OCI-LY7 (cell line): ENCODE measurements at regions of chr18 and their contacts with region 1.

Region 1: GRCh38 chr18:10787293-10787901 is 261.6 kb downstream of the NAPG start:
- DNase-seq: peak; percentile 85
- H3K4me3 ChIP-seq: no peak overlapping the region
- H3K27ac ChIP-seq: no peak overlapping the region
- H3K4me1 ChIP-seq: peaks cover 10% of the 10 kb centered on the region
- CTCF ChIP-seq: peak; percentile 98

Region 2: GRCh38 chr18:10560450-10561045 is 226.8 kb before region 1 on chr18:
- CTCF ChIA-PET with region 1: no interaction called
- POLR2A ChIA-PET with region 1: no interaction called
- intact Hi-C with region 1: loop called (anchors 10 kb)
- DNase-seq: peak; percentile 74
- H3K4me3 ChIP-seq: no peak overlapping the region
- H3K27ac ChIP-seq: no peak overlapping the region
- H3K4me1 ChIP-seq: peaks cover 11% of the 10 kb centered on the region
- CTCF ChIP-seq: peak; percentile 92

Region 3: DNA sequence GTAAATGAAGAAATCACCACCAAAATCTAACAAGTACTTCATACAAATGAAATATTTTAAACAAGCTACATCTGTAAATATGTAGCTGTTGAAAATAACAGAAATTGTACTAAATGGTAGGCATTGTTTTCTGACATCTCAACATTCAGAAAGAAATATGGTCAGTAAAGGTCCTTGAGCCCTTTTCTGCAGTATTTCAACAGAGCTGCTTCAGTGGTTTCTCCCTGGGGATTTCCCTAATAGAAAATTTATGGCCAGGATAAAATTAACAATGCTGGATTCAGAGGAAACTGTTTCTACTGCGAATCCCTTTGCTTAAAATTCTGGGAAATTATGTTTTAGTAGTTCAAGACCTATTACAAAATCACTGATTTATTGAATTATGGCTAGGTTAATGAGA is 105.4 kb after region 1 on chr18:
- CTCF ChIA-PET with region 1: no interaction called
- POLR2A ChIA-PET with region 1: no interaction called
- intact Hi-C with region 1: no loop called
- DNase-seq: no peak
- H3K4me3 ChIP-seq: no peak overlapping the region
- H3K27ac ChIP-seq: no peak overlapping the region
- H3K4me1 ChIP-seq: peaks cover 28% of the 10 kb centered on the region
- CTCF ChIP-seq: no peak

Region 4: DNA sequence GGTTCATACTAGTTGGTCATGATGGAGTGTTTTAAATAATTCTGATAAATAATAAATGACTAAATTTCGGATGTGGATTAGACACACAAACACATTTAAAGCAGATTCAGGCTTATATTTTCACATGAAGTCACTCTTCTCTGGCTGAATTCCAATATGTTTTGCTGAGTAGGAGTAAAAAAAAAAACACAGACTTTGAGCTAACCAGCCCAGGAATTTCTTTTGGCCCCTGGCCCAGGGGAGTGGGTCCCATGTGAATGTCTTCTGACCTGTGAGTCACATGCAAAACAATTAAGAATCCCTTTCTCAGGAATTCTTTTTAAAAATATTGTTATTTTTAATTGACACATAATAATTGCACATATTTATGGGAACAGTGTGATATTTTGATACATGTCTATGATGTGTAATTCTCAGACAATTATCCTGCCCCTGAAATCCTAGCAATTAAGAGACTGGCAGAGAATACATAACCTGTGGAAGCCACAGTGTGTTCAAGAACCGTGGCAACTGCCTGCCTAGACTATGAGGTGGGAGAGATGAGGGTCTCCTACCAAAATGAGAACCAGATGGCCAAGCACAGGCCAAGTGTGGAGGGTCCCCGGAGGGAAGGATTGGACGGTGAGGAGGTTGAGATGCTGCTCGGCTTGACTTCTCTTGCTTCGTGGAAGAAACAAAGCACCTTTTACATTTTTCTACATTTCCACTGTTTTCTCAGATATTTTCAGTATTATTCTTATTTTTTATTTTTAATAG is 125.6 kb after region 1 on chr18:
- CTCF ChIA-PET with region 1: no interaction called
- POLR2A ChIA-PET with region 1: no interaction called
- intact Hi-C with region 1: no loop called
- DNase-seq: no peak
- H3K4me3 ChIP-seq: no peak overlapping the region
- H3K27ac ChIP-seq: no peak overlapping the region
- H3K4me1 ChIP-seq: peaks cover 5% of the 10 kb centered on the region
- CTCF ChIP-seq: no peak

Region 5: DNA sequence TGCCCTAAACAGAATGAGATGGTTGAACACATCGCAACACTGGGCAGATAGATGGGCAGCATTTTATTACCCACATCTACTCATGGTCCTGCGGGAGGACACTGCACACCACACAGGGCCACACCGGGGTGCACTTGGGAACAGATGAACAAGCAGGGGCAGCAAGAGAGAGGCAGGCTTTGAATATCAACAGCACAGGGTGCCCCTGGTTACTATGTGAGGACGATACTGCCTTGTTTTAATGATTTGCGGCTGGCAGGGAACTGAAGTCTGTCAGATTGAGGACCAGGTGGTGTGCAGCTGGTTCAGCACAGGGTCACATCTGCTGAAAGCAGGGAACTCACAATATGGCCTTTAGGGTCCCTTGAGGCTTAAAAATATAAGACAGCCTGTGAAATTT is 166.3 kb after region 1 on chr18:
- CTCF ChIA-PET with region 1: no interaction called
- POLR2A ChIA-PET with region 1: no interaction called
- intact Hi-C with region 1: loop called (anchors 5 kb)
- DNase-seq: peak; percentile 91
- H3K4me3 ChIP-seq: peak overlapping the region; percentile 11
- H3K27ac ChIP-seq: peak overlapping the region; percentile 99
- H3K4me1 ChIP-seq: peaks cover 79% of the 10 kb centered on the region
- CTCF ChIP-seq: 0 out of 2 replicates have a peak, but pooled peaks have one; percentile 11

Region 6: DNA sequence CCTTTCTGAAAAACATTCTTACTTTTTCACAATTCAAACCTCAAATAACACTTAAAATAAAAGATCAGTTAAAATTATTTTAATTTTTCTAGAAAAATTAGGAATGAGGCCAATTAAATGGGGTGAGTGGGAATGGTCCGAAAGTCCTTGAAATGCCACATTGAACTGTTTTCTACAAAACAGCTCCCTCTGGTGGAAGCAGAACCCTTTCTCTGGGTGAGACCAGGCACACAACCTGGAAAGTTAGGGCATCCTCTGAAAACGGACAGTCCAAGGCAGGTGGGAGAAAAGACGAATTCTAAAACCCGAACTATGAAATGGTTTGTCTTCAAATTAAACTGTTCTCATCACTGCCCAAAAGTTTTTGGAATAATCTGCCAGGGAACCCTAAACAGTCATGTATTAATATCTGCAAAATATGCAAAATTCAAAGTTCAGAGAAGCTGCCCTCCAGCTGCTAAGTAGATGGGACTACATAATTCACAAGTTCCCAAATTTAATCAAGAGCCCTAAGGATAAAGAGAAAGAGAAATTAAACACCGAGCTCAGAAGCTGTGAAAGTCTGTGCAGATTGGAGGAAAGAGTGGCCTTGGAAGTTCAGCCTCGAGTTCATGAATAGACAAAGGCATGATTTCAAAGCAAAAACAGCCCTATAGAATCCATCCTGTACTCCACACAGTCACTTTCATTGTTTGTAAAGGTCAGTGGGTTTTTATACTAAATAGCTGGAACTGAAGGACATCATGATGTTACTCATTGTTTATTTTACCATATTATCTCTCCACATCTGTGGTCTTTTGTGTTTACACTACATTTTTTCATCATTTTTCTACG is 253.6 kb after region 1 on chr18:
- CTCF ChIA-PET with region 1: no interaction called
- POLR2A ChIA-PET with region 1: no interaction called
- intact Hi-C with region 1: loop called (anchors 2 kb)
- DNase-seq: peak; percentile 74
- H3K4me3 ChIP-seq: no peak overlapping the region
- H3K27ac ChIP-seq: no peak overlapping the region
- H3K4me1 ChIP-seq: peaks cover 9% of the 10 kb centered on the region
- CTCF ChIP-seq: peak; percentile 97

Region 7: GRCh38 chr18:11064106-11064505 is 276.7 kb after region 1 on chr18:
- CTCF ChIA-PET with region 1: no interaction called
- POLR2A ChIA-PET with region 1: no interaction called
- intact Hi-C with region 1: no loop called
- DNase-seq: no peak
- H3K4me3 ChIP-seq: no peak overlapping the region
- H3K27ac ChIP-seq: no peak overlapping the region
- H3K4me1 ChIP-seq: no peaks in the 10 kb centered on the region
- CTCF ChIP-seq: no peak

Region 8: GRCh38 chr18:11149441-11150270 is 362.3 kb after region 1 on chr18 and contains the start of gene PIEZO2:
- CTCF ChIA-PET with region 1: no interaction called
- POLR2A ChIA-PET with region 1: no interaction called
- intact Hi-C with region 1: loop called (anchors 1 kb)
- DNase-seq: no peak
- H3K4me3 ChIP-seq: no peak within 1 kb of the TSS
- H3K27ac ChIP-seq: no peak within 1 kb of the TSS
- H3K4me1 ChIP-seq: no peaks in the 10 kb centered on the region
- CTCF ChIP-seq: no peak
- total RNA-seq, gene PIEZO2: 0.95 and 2.6 TPM in 2 replicates

Region 9: DNA sequence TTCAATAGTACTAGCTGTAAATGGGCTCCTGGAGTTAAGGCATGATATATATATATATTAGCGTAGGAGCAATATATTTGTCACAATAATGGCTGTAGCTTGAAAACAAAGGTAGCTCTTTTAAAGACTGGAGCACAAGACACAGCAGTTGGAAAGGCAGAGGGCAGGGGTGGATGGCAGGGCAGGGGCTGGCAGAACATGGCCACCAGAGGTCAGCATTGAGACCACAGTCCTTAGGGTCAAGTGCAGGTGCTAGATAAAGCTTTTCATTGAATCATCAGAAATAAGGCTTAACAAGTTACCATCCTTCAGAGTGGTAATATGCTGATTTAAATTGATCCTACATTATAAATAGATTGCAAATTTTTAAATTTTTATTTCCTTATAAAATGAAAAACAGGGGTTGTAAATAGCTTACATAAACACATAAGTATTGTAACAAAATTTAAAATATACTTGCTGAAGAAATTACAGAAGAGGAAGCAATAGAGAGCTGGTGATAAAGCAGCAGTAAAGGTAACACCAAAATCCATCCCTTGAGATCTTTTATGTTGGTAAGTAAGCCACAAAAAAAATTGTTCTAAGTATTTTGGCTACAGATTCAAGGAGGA is 523.2 kb after region 1 on chr18:
- CTCF ChIA-PET with region 1: no interaction called
- POLR2A ChIA-PET with region 1: no interaction called
- intact Hi-C with region 1: loop called (anchors 2 kb)
- DNase-seq: peak; percentile 64
- H3K4me3 ChIP-seq: no peak overlapping the region
- H3K27ac ChIP-seq: no peak overlapping the region
- H3K4me1 ChIP-seq: no peaks in the 10 kb centered on the region
- CTCF ChIP-seq: peak; percentile 93

Region 10: GRCh38 chr18:11518788-11519685 is 731.6 kb after region 1 on chr18:
- CTCF ChIA-PET with region 1: no interaction called
- POLR2A ChIA-PET with region 1: no interaction called
- intact Hi-C with region 1: loop called (anchors 10 kb)
- DNase-seq: peak; percentile 82
- H3K4me3 ChIP-seq: no peak overlapping the region
- H3K27ac ChIP-seq: no peak overlapping the region
- H3K4me1 ChIP-seq: no peaks in the 10 kb centered on the region
- CTCF ChIP-seq: peak; percentile 96